B cell (primary cell): ENCODE measurements at regions of chr11 and their contacts with region 1.

Region 1: GRCh38 chr11:31369348-31370329 is at the starts of genes DCDC1 and DNAJC24:
- DNase-seq: peak; percentile 95
- ATAC-seq: peak; percentile 96
- H3K4me3 ChIP-seq: peak within 1 kb of the TSS; percentile 67 to 91 (median 82)
- H3K4me3 Mint-ChIP-seq: peak within 1 kb of the TSS; percentile 95
- H3K27ac ChIP-seq: peak within 1 kb of the TSS; percentile 67 to 89
- H3K27ac Mint-ChIP-seq: peak within 1 kb of the TSS; percentile 96
- H3K4me1 ChIP-seq: peaks cover 10% of the 10 kb centered on the region in 2 donors
- H3K4me1 Mint-ChIP-seq: peaks cover 31% of the 10 kb centered on the region
- H3K27me3 ChIP-seq: peaks cover 0 to 8% (median 0%) of the 10 kb centered on the region in 4 experiments
- H3K27me3 Mint-ChIP-seq: peaks cover 8% of the 10 kb centered on the region
- CTCF ChIP-seq: no peak
- total RNA-seq, gene DCDC1: not detected in 2 replicates
- total RNA-seq, gene DNAJC24: 24.6 and 31.3 TPM in 2 replicates

Region 2: DNA sequence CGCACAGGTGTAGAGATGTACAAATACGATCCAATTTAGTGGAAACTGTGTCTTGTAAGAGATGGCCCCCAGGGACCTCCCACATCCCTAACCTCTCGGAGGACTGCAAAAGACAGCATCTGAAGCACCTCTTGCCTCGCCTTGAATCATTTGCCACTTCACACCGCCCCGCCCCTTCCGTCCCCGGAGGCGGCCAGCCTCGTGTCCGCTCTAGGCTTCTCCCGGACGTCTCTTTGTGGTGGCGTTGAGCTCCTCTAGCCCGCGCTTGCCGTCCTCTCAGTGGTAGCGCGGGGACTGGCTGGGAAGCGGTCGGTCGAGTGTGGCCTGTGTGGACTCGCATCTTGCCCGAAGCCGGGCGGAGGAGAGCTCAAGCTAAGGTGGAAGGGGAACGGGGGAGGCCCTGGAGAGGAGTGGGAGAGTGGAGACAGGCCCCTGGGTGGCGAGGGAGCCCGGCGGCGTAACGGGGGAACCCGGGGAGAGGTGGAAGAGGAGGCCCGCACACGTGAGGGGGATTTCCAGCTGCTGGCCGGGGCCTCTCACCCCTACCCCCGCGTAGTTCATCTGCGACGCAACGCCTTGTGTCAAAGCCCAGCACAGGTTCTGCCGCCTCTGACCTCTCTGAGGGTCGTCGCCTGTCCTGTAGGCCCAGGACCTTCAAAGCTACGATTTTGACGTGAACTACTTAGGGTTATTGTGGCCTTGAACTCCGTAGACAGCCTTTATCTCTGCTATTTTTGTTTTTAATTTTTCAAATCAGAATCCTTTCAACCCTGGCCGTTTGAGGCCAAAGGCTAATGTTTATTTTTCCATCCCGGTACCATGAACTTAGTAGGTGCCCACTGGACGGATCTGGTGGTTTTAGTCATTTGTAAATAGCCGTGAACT is 1046.6 kb before region 1 on chr11 and contains the start of gene ARL14EP:
- CTCF ChIA-PET with region 1: no interaction called
- POLR2A ChIA-PET with region 1: no interaction called
- intact Hi-C with region 1: loop called (anchors 2 kb)
- DNase-seq: peak; percentile 92
- ATAC-seq: peak; percentile 94
- H3K4me3 ChIP-seq: peak within 1 kb of the TSS; percentile 64 to 84 (median 74)
- H3K4me3 Mint-ChIP-seq: peak within 1 kb of the TSS; percentile 100
- H3K27ac ChIP-seq: peak within 1 kb of the TSS; percentile 91 to 99
- H3K27ac Mint-ChIP-seq: peak within 1 kb of the TSS; percentile 100
- H3K4me1 ChIP-seq: peaks cover 31 to 44% of the 10 kb centered on the region in 2 donors
- H3K4me1 Mint-ChIP-seq: peaks cover 41% of the 10 kb centered on the region
- H3K27me3 ChIP-seq: peaks cover 0 to 3% (median 1%) of the 10 kb centered on the region in 4 experiments
- H3K27me3 Mint-ChIP-seq: peaks cover 16% of the 10 kb centered on the region
- CTCF ChIP-seq: no peak
- total RNA-seq, gene ARL14EP: 43.7 and 47.3 TPM in 2 replicates

Region 3: GRCh38 chr11:31509429-31510345 is 140.0 kb after region 1 on chr11 and contains the starts of genes ELP4 and IMMP1L:
- CTCF ChIA-PET with region 1: no interaction called
- POLR2A ChIA-PET with region 1: interaction called, 4 read pairs
- intact Hi-C with region 1: loop called (anchors 1 kb)
- DNase-seq: peak; percentile 97
- ATAC-seq: peak; percentile 99
- H3K4me3 ChIP-seq: peak within 1 kb of the TSS; percentile 82 to 100 (median 92)
- H3K4me3 Mint-ChIP-seq: peak within 1 kb of the TSS; percentile 91
- H3K27ac ChIP-seq: peak within 1 kb of the TSS; percentile 89 to 91
- H3K27ac Mint-ChIP-seq: peak within 1 kb of the TSS; percentile 91
- H3K4me1 ChIP-seq: peaks cover 6 to 19% of the 10 kb centered on the region in 2 donors
- H3K4me1 Mint-ChIP-seq: peaks cover 38% of the 10 kb centered on the region
- H3K27me3 ChIP-seq: no peaks in the 10 kb centered on the region
- H3K27me3 Mint-ChIP-seq: no peaks in the 10 kb centered on the region
- CTCF ChIP-seq: no peak
- total RNA-seq, gene ELP4: 30.8 and 31.3 TPM in 2 replicates
- total RNA-seq, gene IMMP1L: 16.5 and 23.2 TPM in 2 replicates